Gastrocnemius medialis (tissue), 4 donors: ENCODE measurements at regions of chr16 and their contacts with region 1.

Region 1: DNA sequence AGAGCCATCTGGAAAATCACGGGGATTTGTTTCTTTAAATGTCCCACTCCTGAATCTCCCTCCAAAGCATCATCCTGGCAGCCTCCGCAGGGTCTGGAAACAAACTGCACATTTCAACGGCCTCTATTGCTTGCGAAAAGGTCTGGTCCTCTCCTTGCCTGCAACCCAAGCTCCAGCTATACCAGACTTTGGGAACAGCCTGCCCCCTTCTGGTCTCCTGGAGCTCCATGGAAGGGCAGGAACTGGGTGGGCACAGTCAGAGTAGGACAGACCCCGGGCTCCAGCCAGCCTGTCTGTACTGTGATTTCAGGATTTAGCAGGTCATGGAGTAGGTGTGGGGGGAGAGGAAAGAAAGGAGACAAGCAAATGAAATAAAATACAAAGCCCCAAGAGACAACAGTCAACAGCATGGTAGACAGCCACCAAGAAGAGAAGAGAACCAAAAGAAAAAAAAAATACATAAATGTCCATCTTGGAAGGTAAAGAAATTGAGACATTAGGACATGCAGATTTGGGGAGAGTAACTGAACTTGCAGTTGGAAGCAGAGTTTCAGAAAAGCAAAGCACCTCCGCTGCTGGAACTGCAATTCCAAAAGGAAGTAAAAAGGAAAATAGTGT is 2.7 kb downstream of the XYLT1 start:
- DNase-seq: peak; percentile 30 to 36
- ATAC-seq: no peak
- H3K4me3 ChIP-seq: no peak overlapping the region
- H3K27ac ChIP-seq: no peak overlapping the region
- H3K4me1 ChIP-seq: peaks cover 7 to 20% of the 10 kb centered on the region in 2 donors
- H3K27me3 ChIP-seq: peaks cover 13 to 27% (median 25%) of the 10 kb centered on the region in 3 donors
- CTCF ChIP-seq: peak; percentile 36 to 56 (median 43)
- POLR2A ChIP-seq: no peak

Region 2: GRCh38 chr16:16861546-16861945 is 606.5 kb before region 1 on chr16:
- in situ Hi-C with region 1: loop called in 1 of 4 experiments (anchors 25 kb)
- intact Hi-C with region 1: no loop called
- DNase-seq: peak in 1 of 2 donors; percentile 3
- ATAC-seq: no peak
- H3K4me3 ChIP-seq: no peak overlapping the region
- H3K27ac ChIP-seq: no peak overlapping the region
- H3K4me1 ChIP-seq: no peaks in the 10 kb centered on the region
- H3K27me3 ChIP-seq: no peaks in the 10 kb centered on the region
- CTCF ChIP-seq: peak; percentile 23 to 50 (median 34)
- POLR2A ChIP-seq: no peak

Region 3: GRCh38 chr16:17224879-17225281 is 243.2 kb before region 1 on chr16:
- in situ Hi-C with region 1: loop called in 2 of 4 experiments (anchors 25 kb)
- intact Hi-C with region 1: loop called (anchors 10 kb)
- DNase-seq: peak; percentile 50 to 75
- ATAC-seq: peak; percentile 97 to 99
- H3K4me3 ChIP-seq: no peak overlapping the region
- H3K27ac ChIP-seq: peak overlapping the region; percentile 43 to 63 (median 56)
- H3K4me1 ChIP-seq: peaks cover 23 to 32% of the 10 kb centered on the region in 2 donors
- H3K27me3 ChIP-seq: no peaks in the 10 kb centered on the region
- CTCF ChIP-seq: no peak
- POLR2A ChIP-seq: no peak

Region 4: DNA sequence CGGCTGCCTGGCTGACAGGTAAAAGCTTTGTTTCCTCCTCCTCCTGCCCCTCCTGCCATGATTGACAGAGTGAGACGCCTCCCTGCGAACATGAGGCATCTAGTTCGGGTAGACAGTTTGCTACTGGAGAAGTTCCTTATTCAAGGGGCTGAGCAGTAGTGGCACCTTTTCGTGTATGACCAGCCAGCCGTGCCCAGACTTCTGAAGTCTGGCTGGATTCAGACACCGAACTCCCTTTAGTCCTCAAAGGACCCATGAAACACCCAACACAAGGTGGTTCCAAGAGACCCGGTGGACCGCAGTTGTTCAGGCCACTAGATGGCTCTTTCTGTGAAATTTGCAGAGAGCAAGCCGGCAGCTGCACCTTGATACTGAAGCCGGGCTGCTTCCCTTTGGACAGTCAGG is 190.1 kb before region 1 on chr16:
- in situ Hi-C with region 1: loop called in 1 of 4 experiments (anchors 10 kb)
- intact Hi-C with region 1: no loop called
- DNase-seq: no peak
- ATAC-seq: no peak
- H3K4me3 ChIP-seq: no peak overlapping the region
- H3K27ac ChIP-seq: no peak overlapping the region
- H3K4me1 ChIP-seq: no peaks in the 10 kb centered on the region
- H3K27me3 ChIP-seq: no peaks in the 10 kb centered on the region
- CTCF ChIP-seq: peak in 3 of 5 experiments; percentile 33 to 41 (median 36)
- POLR2A ChIP-seq: no peak

Region 5: DNA sequence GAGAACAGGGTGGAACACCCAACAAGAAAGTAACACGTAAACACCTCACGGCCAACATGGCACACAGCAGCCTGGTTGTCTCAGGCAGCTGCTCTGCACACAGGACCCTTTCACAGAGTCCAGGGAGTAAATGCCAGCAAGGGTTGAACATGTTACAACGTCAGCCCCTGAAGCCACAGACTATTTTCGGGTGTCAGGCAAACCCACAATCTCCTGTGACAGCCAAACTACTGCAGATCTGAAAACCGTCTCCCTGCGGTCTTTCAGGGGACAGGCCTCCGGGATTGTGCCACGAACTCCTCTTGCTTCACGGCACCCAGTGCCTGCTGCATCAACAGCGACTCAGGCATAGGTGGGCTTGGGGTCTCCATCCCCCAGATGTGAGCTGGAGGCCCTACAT is 125.0 kb before region 1 on chr16:
- in situ Hi-C with region 1: no loop called
- intact Hi-C with region 1: no loop called
- DNase-seq: no peak
- ATAC-seq: no peak
- H3K4me3 ChIP-seq: no peak overlapping the region
- H3K27ac ChIP-seq: no peak overlapping the region
- H3K4me1 ChIP-seq: peaks cover 14 to 16% of the 10 kb centered on the region in 2 donors
- H3K27me3 ChIP-seq: no peaks in the 10 kb centered on the region
- CTCF ChIP-seq: no peak
- POLR2A ChIP-seq: no peak

Region 6: GRCh38 chr16:17578921-17579874 is 111.2 kb after region 1 on chr16:
- in situ Hi-C with region 1: no loop called
- intact Hi-C with region 1: loop called (anchors 5 kb)
- DNase-seq: peak; percentile 24 to 25
- ATAC-seq: peak; percentile 55 to 76
- H3K4me3 ChIP-seq: no peak overlapping the region
- H3K27ac ChIP-seq: no peak overlapping the region
- H3K4me1 ChIP-seq: no peaks in the 10 kb centered on the region
- H3K27me3 ChIP-seq: no peaks in the 10 kb centered on the region
- CTCF ChIP-seq: peak; percentile 42 to 76 (median 68)
- POLR2A ChIP-seq: no peak